ENCODE measurements at regions of chr12 and their contacts with region 1.

Region 1: DNA sequence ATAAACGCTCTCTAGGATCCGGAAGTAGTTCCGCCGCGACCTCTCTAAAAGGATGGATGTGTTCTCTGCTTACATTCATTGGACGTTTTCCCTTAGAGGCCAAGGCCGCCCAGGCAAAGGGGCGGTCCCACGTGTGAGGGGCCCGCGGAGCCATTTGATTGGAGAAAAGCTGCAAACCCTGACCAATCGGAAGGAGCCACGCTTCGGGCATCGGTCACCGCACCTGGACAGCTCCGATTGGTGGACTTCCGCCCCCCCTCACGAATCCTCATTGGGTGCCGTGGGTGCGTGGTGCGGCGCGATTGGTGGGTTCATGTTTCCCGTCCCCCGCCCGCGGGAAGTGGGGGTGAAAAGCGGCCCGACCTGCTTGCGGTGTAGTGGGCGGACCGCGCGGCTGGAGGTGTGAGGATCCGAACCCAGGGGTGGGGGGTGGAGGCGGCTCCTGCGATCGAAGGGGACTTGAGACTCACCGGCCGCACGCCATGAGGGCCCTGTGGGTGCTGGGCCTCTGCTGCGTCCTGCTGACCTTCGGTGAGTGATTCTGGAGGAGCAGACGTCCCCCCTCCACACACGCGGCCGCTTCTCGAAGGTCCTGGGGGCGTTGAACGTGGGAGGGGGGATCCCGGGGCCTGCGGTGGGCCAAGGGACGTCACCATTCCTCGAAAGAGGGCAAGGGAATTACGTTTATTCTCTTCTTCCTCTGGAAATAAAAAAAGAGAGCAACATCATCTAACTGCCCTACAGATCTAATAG is at the start of gene HSP90B1:
- DNase-seq: peak; percentile 100
- ATAC-seq: peak; percentile 87
- H3K4me3 ChIP-seq: peak within 1 kb of the TSS; percentile 84 to 87 (median 85)
- H3K27ac ChIP-seq: peak within 1 kb of the TSS; percentile 90
- H3K4me1 ChIP-seq: peaks cover 45% of the 10 kb centered on the region
- H3K27me3 ChIP-seq: no peaks in the 10 kb centered on the region; a peak in 1 of 5 replicates
- CTCF ChIP-seq: no peak
- EP300 ChIP-seq: peak in 1 of 2 experiments; percentile 7; a peak in 1 of 4 replicates
- POLR2A ChIP-seq: peak; percentile 95 to 99
- RAD21 ChIP-seq: 0 out of 2 replicates have a peak, but pooled peaks have one; percentile 14
- total RNA-seq, gene HSP90B1: 496 and 954 TPM in 2 replicates

Region 2: DNA sequence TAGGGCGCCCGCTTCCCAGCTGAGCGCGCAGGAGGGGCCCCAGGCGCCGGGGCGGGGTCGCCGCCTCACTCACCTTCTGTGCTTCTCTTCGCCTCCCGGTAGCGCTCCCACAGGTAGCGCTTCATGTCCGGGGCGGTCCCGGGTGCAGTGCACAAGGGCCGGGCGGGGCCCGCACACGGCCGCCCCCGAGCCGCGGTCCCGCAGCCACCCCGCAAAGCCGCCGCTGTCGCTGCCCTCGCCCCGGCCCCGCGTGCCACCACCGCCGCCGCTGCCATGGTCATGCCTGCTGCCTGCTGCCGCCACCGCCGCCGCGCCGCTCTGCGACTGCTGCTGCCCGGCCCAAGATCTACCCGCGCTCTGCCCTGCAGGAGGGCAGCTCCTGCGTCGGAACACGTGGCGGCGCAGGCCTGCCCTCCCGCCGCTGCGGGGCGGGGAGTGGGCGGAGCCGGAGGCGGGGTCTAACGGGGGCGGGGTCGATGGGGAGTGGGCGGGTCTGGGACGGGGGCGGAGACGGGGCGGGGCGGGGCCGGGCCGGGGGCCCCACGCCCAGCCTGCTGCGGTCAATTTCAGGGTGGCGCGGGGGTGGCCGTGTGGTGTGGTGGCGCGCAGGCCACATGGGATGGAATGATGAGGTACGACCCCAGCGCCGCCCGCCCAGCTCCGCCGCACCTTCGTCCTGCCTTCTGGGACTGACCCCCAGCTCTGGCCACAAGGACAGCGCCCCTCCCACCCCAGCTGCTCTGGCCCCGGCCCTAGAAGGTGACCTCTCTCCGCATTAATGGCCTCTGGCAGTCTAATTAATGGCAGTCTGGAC is 89.1 kb before region 1 on chr12 and contains the start of gene NT5DC3:
- CTCF ChIA-PET with region 1: no interaction called
- POLR2A ChIA-PET with region 1: interaction called, 15 read pairs
- in situ Hi-C with region 1: no loop called
- intact Hi-C with region 1: loop called (anchors 1 kb)
- DNase-seq: peak; percentile 63
- ATAC-seq: peak; percentile 79
- H3K4me3 ChIP-seq: peak within 1 kb of the TSS; percentile 74 to 87 (median 75)
- H3K27ac ChIP-seq: peak within 1 kb of the TSS; percentile 61
- H3K4me1 ChIP-seq: peaks cover 48% of the 10 kb centered on the region
- H3K27me3 ChIP-seq: no peaks in the 10 kb centered on the region; a peak in 1 of 5 replicates
- CTCF ChIP-seq: peak; percentile 38; the same call in 1 of the 2 replicates
- EP300 ChIP-seq: no peak
- POLR2A ChIP-seq: peak; percentile 82 to 92
- RAD21 ChIP-seq: peak; percentile 66
- total RNA-seq, gene NT5DC3: 6.6 and 7.4 TPM in 2 replicates

Region 3: GRCh38 chr12:103956516-103957027 is 26.4 kb after region 1 on chr12:
- CTCF ChIA-PET with region 1: no interaction called
- POLR2A ChIA-PET with region 1: interaction called, 22 read pairs
- in situ Hi-C with region 1: no loop called
- intact Hi-C with region 1: loop called (anchors 1 kb)
- DNase-seq: peak; percentile 11
- ATAC-seq: peak; percentile 66
- H3K4me3 ChIP-seq: peak overlapping the region; percentile 86 to 90 (median 88)
- H3K27ac ChIP-seq: peak overlapping the region; percentile 92
- H3K4me1 ChIP-seq: peaks cover 47% of the 10 kb centered on the region
- H3K27me3 ChIP-seq: no peaks in the 10 kb centered on the region; a peak in 1 of 5 replicates
- CTCF ChIP-seq: no peak
- EP300 ChIP-seq: no peak
- POLR2A ChIP-seq: no peak
- RAD21 ChIP-seq: no peak

Region 4: GRCh38 chr12:104064031-104064822 is 134.0 kb after region 1 on chr12 and contains the start of gene HCFC2:
- CTCF ChIA-PET with region 1: no interaction called
- POLR2A ChIA-PET with region 1: interaction called, 13 read pairs
- in situ Hi-C with region 1: no loop called
- intact Hi-C with region 1: no loop called
- DNase-seq: peak; percentile 75
- ATAC-seq: peak; percentile 93
- H3K4me3 ChIP-seq: peak within 1 kb of the TSS; percentile 93 to 98 (median 97)
- H3K27ac ChIP-seq: peak within 1 kb of the TSS; percentile 59
- H3K4me1 ChIP-seq: peaks cover 16% of the 10 kb centered on the region
- H3K27me3 ChIP-seq: no peaks in the 10 kb centered on the region; a peak in 1 of 5 replicates
- CTCF ChIP-seq: peak; percentile 16; the same call in 1 of the 2 replicates
- EP300 ChIP-seq: no peak; a peak in 1 of 4 replicates
- POLR2A ChIP-seq: peak; percentile 47 to 73; a peak in 2 of 4 replicates
- RAD21 ChIP-seq: no peak; the same call in 1 of the 2 replicates
- total RNA-seq, gene HCFC2: 4.9 and 5.6 TPM in 2 replicates